Heart right ventricle (tissue), 16 donors: ENCODE measurements at regions of chr1 and their contacts with region 1.

Region 1: GRCh38 chr1:156689035-156689952 is 12.1 kb upstream of the NES start:
- DNase-seq: peak; percentile 71 to 74
- ATAC-seq: peak; percentile 82 to 94 (median 91)
- H3K4me3 ChIP-seq: peak overlapping the region in 4 of 10 donors; percentile 1 to 36 (median 17)
- H3K27ac ChIP-seq: no peak overlapping the region
- H3K4me1 ChIP-seq: peaks cover 0 to 26% (median 17%) of the 10 kb centered on the region in 9 donors
- H3K27me3 ChIP-seq: peaks cover 0 to 90% (median 52%) of the 10 kb centered on the region in 7 donors
- CTCF ChIP-seq: peak; percentile 87 to 96 (median 93)

Region 2: GRCh38 chr1:156639601-156640101 is 49.6 kb before region 1 on chr1:
- intact Hi-C with region 1: loop called in 1 of 10 experiments (anchors 10 kb)
- DNase-seq: no peak
- ATAC-seq: no peak
- H3K4me3 ChIP-seq: no peak overlapping the region
- H3K27ac ChIP-seq: no peak overlapping the region
- H3K4me1 ChIP-seq: peaks cover 6 to 20% (median 15%) of the 10 kb centered on the region in 9 donors
- H3K27me3 ChIP-seq: peaks cover 6 to 96% (median 77%) of the 10 kb centered on the region in 7 donors
- CTCF ChIP-seq: no peak

Region 3: GRCh38 chr1:156721535-156721934 is 32.2 kb after region 1 on chr1:
- intact Hi-C with region 1: loop called (anchors 1 to 2 kb)
- DNase-seq: no peak
- ATAC-seq: no peak
- H3K4me3 ChIP-seq: no peak overlapping the region
- H3K27ac ChIP-seq: no peak overlapping the region
- H3K4me1 ChIP-seq: peaks cover 16 to 24% (median 20%) of the 10 kb centered on the region in 9 donors
- H3K27me3 ChIP-seq: no peaks in the 10 kb centered on the region
- CTCF ChIP-seq: no peak

Region 4: GRCh38 chr1:156767101-156767878 is 78.0 kb after region 1 on chr1 and contains the start of gene PRCC:
- intact Hi-C with region 1: no loop called
- DNase-seq: peak; percentile 94 to 99
- ATAC-seq: peak; percentile 96 to 98 (median 97)
- H3K4me3 ChIP-seq: peak within 1 kb of the TSS; percentile 73 to 99 (median 95)
- H3K27ac ChIP-seq: peak within 1 kb of the TSS; percentile 90 to 98 (median 96)
- H3K4me1 ChIP-seq: peaks cover 12 to 53% (median 45%) of the 10 kb centered on the region in 9 donors
- H3K27me3 ChIP-seq: no peaks in the 10 kb centered on the region
- CTCF ChIP-seq: no peak
- total RNA-seq, gene PRCC: 32.1 to 56.9 (median 44.2) TPM

Region 5: GRCh38 chr1:156813750-156814570 is 124.7 kb after region 1 on chr1:
- intact Hi-C with region 1: no loop called
- DNase-seq: peak; percentile 42 to 64
- ATAC-seq: peak; percentile 58 to 83 (median 68)
- H3K4me3 ChIP-seq: peak overlapping the region; percentile 12 to 56 (median 49)
- H3K27ac ChIP-seq: peak overlapping the region in 5 of 10 donors; percentile 19 to 93 (median 80)
- H3K4me1 ChIP-seq: peaks cover 12 to 51% (median 23%) of the 10 kb centered on the region in 9 donors
- H3K27me3 ChIP-seq: peaks cover 0 to 14% (median 4%) of the 10 kb centered on the region in 7 donors
- CTCF ChIP-seq: peak in 8 of 9 donors; percentile 17 to 76 (median 64)